Heart right ventricle (tissue), 16 donors: ENCODE measurements at regions of chr9 and their contacts with region 1.

Region 1: GRCh38 chr9:23855873-23856604 is 30.0 kb upstream of the ELAVL2 start:
- DNase-seq: no peak
- ATAC-seq: no peak
- H3K4me3 ChIP-seq: no peak overlapping the region
- H3K27ac ChIP-seq: no peak overlapping the region
- H3K4me1 ChIP-seq: peaks cover 0 to 5% (median 3%) of the 10 kb centered on the region in 9 donors
- H3K27me3 ChIP-seq: peaks cover 0 to 28% (median 20%) of the 10 kb centered on the region in 7 donors
- CTCF ChIP-seq: no peak

Region 2: GRCh38 chr9:23926378-23926777 is 70.3 kb after region 1 on chr9:
- intact Hi-C with region 1: loop called in 1 of 10 experiments (anchors 10 kb)
- DNase-seq: no peak
- ATAC-seq: no peak
- H3K4me3 ChIP-seq: no peak overlapping the region
- H3K27ac ChIP-seq: no peak overlapping the region
- H3K4me1 ChIP-seq: no peaks in the 10 kb centered on the region
- H3K27me3 ChIP-seq: no peaks in the 10 kb centered on the region
- CTCF ChIP-seq: no peak